Activated CD4-positive, alpha-beta memory T cell treated with anti-CD3 and anti-CD28 coated beads for 36 hours (primary cell): ENCODE measurements at regions of chr10 and their contacts with region 1.

Region 1: DNA sequence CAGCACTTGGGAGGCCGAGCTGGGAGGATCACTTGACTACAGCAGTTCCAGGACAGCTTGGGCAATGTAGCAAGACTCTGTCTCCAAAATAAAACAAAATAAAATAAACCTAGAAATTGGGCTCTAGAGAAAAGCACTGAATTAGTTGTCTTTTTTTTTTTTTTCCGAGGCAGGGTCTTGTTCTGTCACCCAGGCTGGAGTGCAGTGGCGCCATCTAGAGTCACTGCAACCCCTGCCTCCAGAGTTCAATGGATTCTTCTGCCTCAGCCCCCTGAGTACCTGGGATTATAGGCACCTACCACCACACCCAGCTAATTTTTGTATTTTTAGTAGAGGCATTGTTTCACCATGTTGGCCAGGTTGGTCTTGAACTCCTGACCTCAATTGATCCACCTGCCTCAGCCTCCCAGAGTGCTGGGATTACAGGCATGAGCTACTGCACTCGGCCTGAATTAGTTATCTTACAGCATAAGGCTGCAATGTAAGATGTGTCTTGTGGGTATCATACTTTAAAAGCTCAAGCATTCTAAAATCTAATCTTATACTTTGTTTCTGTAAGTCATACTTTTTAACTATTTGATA is 12.8 kb downstream of the MEIG1 start:
- DNase-seq: peak; percentile 66
- H3K4me3 Mint-ChIP-seq: no peak overlapping the region
- H3K27ac Mint-ChIP-seq: no peak overlapping the region
- H3K4me1 Mint-ChIP-seq: peaks cover under 1% of the 10 kb centered on the region
- H3K27me3 Mint-ChIP-seq: peaks cover 15% of the 10 kb centered on the region

Region 2: DNA sequence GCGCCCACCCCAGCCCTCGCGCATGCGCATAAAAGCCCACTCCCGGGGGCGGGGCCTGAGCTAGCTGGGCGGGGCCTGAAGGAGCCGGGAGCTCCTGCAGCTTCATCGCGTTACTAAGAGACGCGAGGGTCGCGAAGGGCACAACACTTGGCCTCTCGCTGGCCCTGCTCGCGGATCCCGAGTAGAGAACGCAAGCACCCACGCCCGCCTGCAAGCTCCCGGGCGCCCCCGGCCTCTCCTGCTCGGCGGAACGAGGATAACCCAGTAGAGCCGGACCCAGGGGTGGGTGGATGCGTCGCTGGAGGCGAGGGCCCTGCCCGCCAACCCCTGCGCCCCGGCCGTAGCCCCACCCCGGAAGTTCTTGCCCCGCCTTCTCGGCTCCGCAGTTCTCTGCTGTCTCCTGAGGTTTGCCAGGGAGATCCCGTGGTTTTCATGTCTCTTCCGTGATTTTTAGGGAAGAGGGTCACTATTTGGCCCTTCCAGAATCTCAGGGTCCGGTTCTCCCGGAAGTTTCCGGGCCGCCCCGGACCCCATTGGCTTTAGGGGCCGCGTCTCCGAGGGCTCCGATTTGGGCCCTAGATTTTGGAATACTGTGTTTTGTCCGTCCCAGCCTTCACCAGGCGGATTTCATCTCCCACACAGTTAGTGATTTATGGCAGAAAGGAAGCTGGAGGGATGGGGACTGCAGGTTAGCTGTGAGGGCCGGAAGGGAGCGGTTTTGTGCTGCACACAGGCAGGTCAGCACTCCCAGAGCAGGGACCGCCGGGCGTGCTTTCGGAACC is 12.5 kb before region 1 on chr10 and contains the start of gene MEIG1:
- CTCF ChIA-PET with region 1: interaction called, 24 read pairs
- POLR2A ChIA-PET with region 1: no interaction called
- intact Hi-C with region 1: no loop called
- DNase-seq: peak; percentile 95
- H3K4me3 Mint-ChIP-seq: peak within 1 kb of the TSS; percentile 88
- H3K27ac Mint-ChIP-seq: peak within 1 kb of the TSS; percentile 95
- H3K4me1 Mint-ChIP-seq: peaks cover 24% of the 10 kb centered on the region
- H3K27me3 Mint-ChIP-seq: no peaks in the 10 kb centered on the region
- total RNA-seq, gene MEIG1: 0.95 to 1.4 TPM

Region 3: DNA sequence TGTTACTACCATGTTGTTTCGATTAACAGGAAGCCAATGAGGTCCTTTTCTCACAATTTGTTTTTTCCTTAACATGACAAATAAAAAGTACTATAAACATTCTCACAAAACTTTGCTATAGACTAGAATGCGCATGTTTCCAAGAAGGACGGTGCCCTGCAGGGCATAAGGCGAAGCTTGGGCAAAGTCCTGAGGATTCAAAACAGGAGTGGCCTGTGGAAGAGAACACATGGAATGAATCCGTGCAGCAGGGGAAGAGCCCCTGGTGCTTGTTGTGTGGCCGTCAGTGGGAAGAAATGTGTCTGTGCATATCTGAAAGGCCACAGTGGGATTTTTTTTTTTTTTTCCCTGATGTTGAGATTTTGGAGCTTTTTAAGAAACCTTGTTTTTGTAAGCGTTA is 680.2 kb after region 1 on chr10:
- CTCF ChIA-PET with region 1: no interaction called
- POLR2A ChIA-PET with region 1: no interaction called
- intact Hi-C with region 1: no loop called
- DNase-seq: no peak
- H3K4me3 Mint-ChIP-seq: no peak overlapping the region
- H3K27ac Mint-ChIP-seq: no peak overlapping the region
- H3K4me1 Mint-ChIP-seq: no peaks in the 10 kb centered on the region
- H3K27me3 Mint-ChIP-seq: peaks cover 4% of the 10 kb centered on the region